ENCODE measurements at regions of chr10 and their contacts with region 1.

Region 1: GRCh38 chr10:124827474-124827873 is 25.9 kb downstream of the ABRAXAS2 start:
- DNase-seq: peak in 1 of 2 donors; percentile 45
- H3K4me3 ChIP-seq: no peak overlapping the region
- H3K27ac ChIP-seq: no peak overlapping the region
- H3K4me1 ChIP-seq: peaks cover 0 to 6% (median 0%) of the 10 kb centered on the region in 4 donors
- H3K27me3 ChIP-seq: no peaks in the 10 kb centered on the region
- CTCF ChIP-seq: peak in 5 of 7 experiments; percentile 7 to 57 (median 40)
- EP300 ChIP-seq: no peak
- POLR2A ChIP-seq: no peak

Region 2: GRCh38 chr10:124530215-124530665 is 297.2 kb before region 1 on chr10:
- intact Hi-C with region 1: loop called (anchors 10 kb)
- DNase-seq: peak; percentile 90 to 94
- H3K4me3 ChIP-seq: no peak overlapping the region
- H3K27ac ChIP-seq: no peak overlapping the region
- H3K4me1 ChIP-seq: peaks cover 0 to 23% (median 8%) of the 10 kb centered on the region in 4 donors
- H3K27me3 ChIP-seq: no peaks in the 10 kb centered on the region
- CTCF ChIP-seq: peak in 5 of 7 experiments; percentile 73 to 91 (median 82)
- EP300 ChIP-seq: no peak
- POLR2A ChIP-seq: no peak

Measured in stomach (tissue), 19 donors.